Right ventricle myocardium superior (tissue), 1 donor: ENCODE measurements at regions of chr6 and their contacts with region 1.

Region 1: GRCh38 chr6:68760941-68761676 is 126.0 kb downstream of the ADGRB3 start:
- DNase-seq: no peak
- ATAC-seq: peak; percentile 78

Region 2: DNA sequence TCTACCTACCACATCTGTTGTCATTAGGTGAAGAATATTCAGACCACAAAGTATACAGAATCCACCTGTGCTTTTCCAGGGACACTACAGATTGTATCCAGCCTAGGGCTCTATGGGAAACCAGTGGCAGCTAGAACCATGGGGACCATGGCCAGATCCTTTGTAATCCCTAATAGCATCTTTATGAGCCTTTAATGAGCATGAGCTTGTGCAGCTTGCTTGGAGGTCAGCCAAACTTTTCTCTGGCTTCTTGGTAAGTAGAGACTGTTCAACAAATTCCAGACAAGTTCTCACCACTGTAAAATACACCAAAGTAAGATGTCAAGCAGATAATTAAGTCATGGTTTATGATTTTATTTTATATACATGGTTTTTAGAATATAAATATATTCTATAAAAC is 427.7 kb before region 1 on chr6:
- intact Hi-C with region 1: no loop called
- DNase-seq: no peak
- ATAC-seq: no peak

Region 3: GRCh38 chr6:68615938-68616337 is 145.2 kb before region 1 on chr6:
- intact Hi-C with region 1: no loop called
- DNase-seq: no peak
- ATAC-seq: no peak

Region 4: DNA sequence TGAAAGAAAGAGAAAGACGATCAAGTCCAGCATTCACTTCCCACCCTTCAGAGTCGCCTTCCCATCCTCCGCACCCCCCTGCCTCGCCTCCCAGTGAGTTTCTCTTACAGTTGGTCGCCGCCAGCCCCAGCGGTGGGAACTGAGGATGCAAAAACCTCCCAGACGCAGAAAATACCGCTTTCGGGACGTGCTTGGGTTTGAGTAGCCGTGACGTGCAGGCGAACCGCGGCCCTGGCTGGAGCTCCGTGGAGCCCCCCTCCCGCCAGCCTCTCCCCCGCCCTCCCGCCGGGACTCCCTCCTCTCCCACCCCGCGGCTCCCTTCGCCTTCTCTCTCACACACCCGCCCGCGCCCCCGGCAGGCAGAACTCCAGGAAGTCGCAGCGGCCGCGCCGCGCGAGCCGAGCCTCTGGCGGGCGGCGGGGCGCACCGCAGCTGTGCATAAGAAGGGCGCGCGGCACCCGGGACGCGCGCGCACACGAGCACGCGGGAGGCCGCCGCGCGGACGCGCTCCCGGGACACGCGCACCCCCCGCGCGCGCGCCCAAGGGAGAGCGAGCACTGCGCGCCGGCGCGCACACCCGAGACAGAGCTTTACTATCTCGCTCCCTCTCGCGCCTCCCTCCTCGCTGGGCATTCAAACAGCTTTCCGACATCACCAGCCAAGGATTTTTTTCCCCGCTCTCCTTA is 126.2 kb before region 1 on chr6 and contains the start of gene ADGRB3:
- intact Hi-C with region 1: loop called (anchors 5 kb)
- DNase-seq: peak; percentile 89
- ATAC-seq: peak; percentile 94
- total RNA-seq, gene ADGRB3: 2.0 TPM